Right cardiac atrium (tissue), 5 donors: ENCODE measurements at regions of chr6 and their contacts with region 1.

Region 1: GRCh38 chr6:36423101-36423824 is 19.4 kb downstream of the PXT1 start:
- DNase-seq: peak; percentile 99 to 100 (median 99)
- ATAC-seq: peak; percentile 100
- H3K4me3 ChIP-seq: peak overlapping the region; percentile 68
- H3K27ac ChIP-seq: peak overlapping the region; percentile 78
- H3K4me1 ChIP-seq: no peaks in the 10 kb centered on the region
- H3K27me3 ChIP-seq: no peaks in the 10 kb centered on the region

Region 2: GRCh38 chr6:36526066-36526465 is 102.8 kb after region 1 on chr6:
- intact Hi-C with region 1: no loop called
- DNase-seq: no peak
- ATAC-seq: no peak
- H3K4me3 ChIP-seq: no peak overlapping the region
- H3K27ac ChIP-seq: no peak overlapping the region
- H3K4me1 ChIP-seq: no peaks in the 10 kb centered on the region
- H3K27me3 ChIP-seq: no peaks in the 10 kb centered on the region

Region 3: DNA sequence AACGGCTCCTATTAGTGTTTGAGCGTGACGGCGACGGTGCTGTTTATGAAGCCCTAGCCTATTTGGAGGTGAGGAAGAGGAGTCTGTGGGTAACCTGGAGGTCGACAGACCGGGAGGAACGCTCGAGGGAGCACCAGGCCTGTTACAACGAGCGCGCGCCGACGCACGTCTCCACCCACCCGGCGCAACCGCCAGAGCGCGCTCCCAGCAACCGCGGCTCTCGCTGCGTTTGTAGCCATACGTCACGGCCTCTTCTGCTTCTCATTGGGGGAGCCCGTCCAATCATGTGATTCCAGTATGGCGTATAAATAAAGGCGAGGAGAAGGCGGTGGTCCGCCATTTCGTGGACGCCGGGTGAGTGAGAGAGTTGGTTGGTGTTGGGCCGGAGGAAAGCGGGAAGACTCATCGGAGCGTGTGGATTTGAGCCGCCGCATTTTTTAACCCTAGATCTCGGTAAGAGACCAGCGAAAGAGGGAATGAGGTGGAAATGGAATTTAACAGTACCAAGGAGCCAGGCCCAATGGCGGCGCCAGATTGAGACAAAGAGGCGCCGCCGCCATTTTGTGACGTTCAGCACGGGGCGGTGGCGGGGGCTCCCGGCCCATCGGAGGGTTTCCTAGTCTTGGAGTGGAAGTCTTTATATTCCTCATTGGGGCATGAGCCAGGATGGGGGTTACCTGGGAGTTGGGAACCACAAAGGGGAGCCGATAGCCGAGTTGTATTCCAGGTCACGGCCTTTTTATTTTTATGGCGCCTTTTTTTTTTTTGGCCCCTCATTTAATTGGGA is 171.0 kb after region 1 on chr6 and contains the start of gene SRSF3:
- intact Hi-C with region 1: loop called in 1 of 4 experiments (anchors 10 kb)
- DNase-seq: peak; percentile 97 to 98 (median 98)
- ATAC-seq: peak; percentile 98 to 99
- H3K4me3 ChIP-seq: peak within 1 kb of the TSS; percentile 99
- H3K27ac ChIP-seq: peak within 1 kb of the TSS; percentile 96
- H3K4me1 ChIP-seq: peaks cover 6% of the 10 kb centered on the region
- H3K27me3 ChIP-seq: no peaks in the 10 kb centered on the region
- total RNA-seq, gene SRSF3: 144 to 185 (median 151) TPM